ENCODE measurements at regions of chr6 and their contacts with region 1.

Region 1: DNA sequence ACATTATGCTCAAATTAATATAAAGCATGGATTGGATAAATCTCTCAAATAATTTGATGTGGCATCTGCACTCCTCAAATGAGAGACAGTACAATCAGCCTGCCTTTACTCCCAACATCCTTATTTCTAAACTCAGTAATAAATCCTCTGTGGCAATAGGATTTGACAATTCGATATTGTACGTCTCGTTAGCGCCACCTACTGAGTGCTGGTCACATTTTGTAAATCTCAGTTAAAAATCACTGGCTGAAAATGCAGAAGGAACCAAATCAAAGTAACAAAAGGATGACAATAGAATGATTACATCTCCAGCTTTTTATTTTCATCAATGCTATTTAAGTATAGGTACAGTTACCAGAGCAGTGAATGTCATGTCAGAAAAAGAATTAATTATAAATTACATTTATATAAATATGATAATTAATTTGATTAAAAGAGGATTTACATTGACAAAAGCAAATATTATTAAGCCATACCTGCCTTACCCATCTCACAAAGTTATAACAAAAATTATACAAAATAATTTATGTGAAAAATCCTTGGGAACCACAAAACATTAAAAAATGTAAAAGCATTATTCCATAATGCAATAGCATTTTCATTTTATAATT is 20.2 kb upstream of the GJE1 start:
- DNase-seq: peak; percentile 86
- ATAC-seq: no peak
- H3K4me3 Mint-ChIP-seq: no peak overlapping the region
- H3K27ac Mint-ChIP-seq: no peak overlapping the region
- H3K4me1 Mint-ChIP-seq: no peaks in the 10 kb centered on the region
- H3K27me3 Mint-ChIP-seq: peaks cover 2% of the 10 kb centered on the region

Region 2: DNA sequence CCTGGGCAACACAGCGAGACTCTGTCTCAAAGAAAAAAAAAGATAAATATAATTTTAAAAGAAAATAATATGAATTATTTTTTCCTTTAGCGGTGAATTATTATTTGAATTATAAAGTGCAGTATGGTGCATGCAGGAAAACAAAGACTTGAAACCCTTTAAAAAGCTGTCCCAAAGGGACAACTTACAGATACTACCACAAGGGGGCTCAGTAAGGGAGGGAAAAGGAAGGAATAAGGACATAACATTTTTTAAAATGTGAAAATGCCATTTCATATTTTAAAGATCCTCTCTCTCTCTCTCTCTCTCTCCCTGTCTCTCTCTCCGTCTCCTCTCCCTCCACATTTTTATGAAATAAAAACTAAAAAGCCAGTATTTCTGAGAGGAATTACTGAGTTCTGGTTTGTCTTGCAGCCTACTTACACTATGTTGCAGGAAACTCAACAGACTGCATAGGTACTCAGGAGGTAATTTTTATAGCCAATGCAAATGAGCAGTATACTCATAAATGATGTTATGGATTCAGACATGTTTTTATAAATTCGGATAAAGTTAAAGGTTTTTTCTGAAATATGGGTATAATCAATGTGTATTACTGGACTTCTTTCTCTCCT is 434.9 kb before region 1 on chr6:
- CTCF ChIA-PET with region 1: interaction called, 4 read pairs
- POLR2A ChIA-PET with region 1: no interaction called
- intact Hi-C with region 1: loop called (anchors 1 to 2 kb)
- DNase-seq: no peak
- ATAC-seq: no peak
- H3K4me3 Mint-ChIP-seq: no peak overlapping the region
- H3K27ac Mint-ChIP-seq: no peak overlapping the region
- H3K4me1 Mint-ChIP-seq: no peaks in the 10 kb centered on the region
- H3K27me3 Mint-ChIP-seq: no peaks in the 10 kb centered on the region

Region 3: DNA sequence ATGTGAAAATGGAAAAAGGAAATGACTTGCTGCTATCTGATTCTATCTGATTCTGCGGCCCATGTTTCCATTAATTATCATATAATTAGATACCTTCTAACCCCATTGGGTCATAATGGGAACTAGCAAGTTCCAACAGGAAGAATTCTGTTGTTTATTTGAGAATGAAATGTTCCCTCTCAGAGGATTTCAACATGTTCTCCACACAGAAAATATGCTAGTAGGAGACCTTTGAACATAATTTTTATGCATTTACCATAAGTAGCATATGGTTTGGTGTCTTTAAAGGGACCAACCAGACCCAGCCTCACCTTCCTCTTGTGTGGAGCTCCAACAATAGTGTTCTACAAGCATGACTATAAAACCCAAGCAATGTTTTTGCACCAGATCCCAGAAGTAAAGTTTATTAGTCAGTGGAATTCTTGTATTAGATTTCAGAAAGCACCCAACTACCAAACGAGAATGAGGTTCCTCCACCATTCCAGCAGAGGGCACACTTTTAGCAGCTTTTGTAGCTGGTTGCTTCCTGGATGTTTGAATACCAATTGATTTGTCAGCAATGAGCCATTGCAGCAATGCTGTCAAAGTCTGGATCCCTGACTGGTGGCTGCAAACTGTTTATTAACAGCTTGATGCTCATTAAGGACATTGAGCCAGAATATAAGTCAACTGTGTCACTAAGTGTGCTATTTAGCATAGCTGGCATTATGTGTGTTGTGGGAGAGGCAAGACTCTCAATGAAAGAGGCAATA is 123.4 kb before region 1 on chr6:
- CTCF ChIA-PET with region 1: interaction called, 57 read pairs
- POLR2A ChIA-PET with region 1: no interaction called
- intact Hi-C with region 1: loop called (anchors 1 kb)
- DNase-seq: peak; percentile 50
- ATAC-seq: peak; percentile 57
- H3K4me3 Mint-ChIP-seq: no peak overlapping the region
- H3K27ac Mint-ChIP-seq: no peak overlapping the region
- H3K4me1 Mint-ChIP-seq: no peaks in the 10 kb centered on the region
- H3K27me3 Mint-ChIP-seq: peaks cover 2% of the 10 kb centered on the region

Measured in activated CD4-positive, alpha-beta T cell treated with anti-CD3 and anti-CD28 coated beads for 36 hours (primary cell).